PC-9 (cell line): ENCODE measurements at regions of chr18 and their contacts with region 1.

Region 1: DNA sequence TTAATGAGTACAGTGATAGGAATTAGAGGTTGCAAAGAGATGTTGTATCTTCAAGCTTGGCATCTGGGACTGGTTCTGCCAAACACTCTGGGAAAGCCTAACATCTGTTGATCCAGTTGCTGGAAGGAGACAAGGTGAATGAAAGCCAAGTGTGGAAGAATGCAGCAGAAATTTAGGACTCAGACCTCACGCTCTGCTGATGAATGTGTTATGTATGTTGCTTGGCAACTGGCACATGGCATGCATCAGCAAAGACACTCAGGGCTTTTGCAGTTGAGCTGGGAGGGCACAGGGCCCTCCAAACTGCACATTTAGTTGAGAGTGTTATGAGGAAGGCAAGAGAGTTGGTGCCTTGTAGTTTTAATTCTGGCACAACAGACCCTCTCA is 105.5 kb downstream of the COLEC12 start:
- DNase-seq: no peak
- H3K4me3 ChIP-seq: no peak overlapping the region
- H3K27ac ChIP-seq: no peak overlapping the region
- H3K4me1 ChIP-seq: no peaks in the 10 kb centered on the region
- H3K27me3 ChIP-seq: peaks cover 84% of the 10 kb centered on the region
- CTCF ChIP-seq: no peak

Region 2: GRCh38 chr18:323253-323622 is 71.8 kb before region 1 on chr18:
- CTCF ChIA-PET with region 1: no interaction called
- POLR2A ChIA-PET with region 1: no interaction called
- intact Hi-C with region 1: no loop called
- DNase-seq: no peak
- H3K4me3 ChIP-seq: no peak overlapping the region
- H3K27ac ChIP-seq: no peak overlapping the region
- H3K4me1 ChIP-seq: peaks cover 7% of the 10 kb centered on the region; the same call in 1 of the 2 replicates
- H3K27me3 ChIP-seq: peaks cover 87% of the 10 kb centered on the region
- CTCF ChIP-seq: no peak

Region 3: GRCh38 chr18:446941-447560 is 52.1 kb after region 1 on chr18:
- CTCF ChIA-PET with region 1: no interaction called
- POLR2A ChIA-PET with region 1: no interaction called
- intact Hi-C with region 1: no loop called
- DNase-seq: no peak
- H3K4me3 ChIP-seq: no peak overlapping the region
- H3K27ac ChIP-seq: no peak overlapping the region
- H3K4me1 ChIP-seq: no peaks in the 10 kb centered on the region
- H3K27me3 ChIP-seq: peaks cover 43% of the 10 kb centered on the region
- CTCF ChIP-seq: no peak

Region 4: GRCh38 chr18:582465-582864 is 187.5 kb after region 1 on chr18:
- CTCF ChIA-PET with region 1: interaction called, 18 read pairs
- POLR2A ChIA-PET with region 1: no interaction called
- intact Hi-C with region 1: no loop called
- DNase-seq: no peak
- H3K4me3 ChIP-seq: no peak overlapping the region
- H3K27ac ChIP-seq: no peak overlapping the region
- H3K4me1 ChIP-seq: no peaks in the 10 kb centered on the region
- H3K27me3 ChIP-seq: peaks cover 74% of the 10 kb centered on the region
- CTCF ChIP-seq: no peak